ENCODE measurements at regions of chr9 and their contacts with region 1.

Region 1: GRCh38 chr9:129979071-129979745 is 63.8 kb downstream of the FNBP1 start:
- DNase-seq: no peak
- H3K4me3 ChIP-seq: no peak overlapping the region
- H3K27ac ChIP-seq: no peak overlapping the region
- H3K4me1 ChIP-seq: no peaks in the 10 kb centered on the region
- H3K27me3 ChIP-seq: no peaks in the 10 kb centered on the region
- CTCF ChIP-seq: no peak

Region 2: GRCh38 chr9:129919841-129920240 is 59.4 kb before region 1 on chr9:
- CTCF ChIA-PET with region 1: no interaction called
- dilution Hi-C with region 1: loop called (anchors 5 kb)
- in situ Hi-C with region 1: no loop called
- intact Hi-C with region 1: no loop called
- DNase-seq: no peak
- H3K4me3 ChIP-seq: no peak overlapping the region
- H3K27ac ChIP-seq: no peak overlapping the region
- H3K4me1 ChIP-seq: no peaks in the 10 kb centered on the region
- H3K27me3 ChIP-seq: no peaks in the 10 kb centered on the region
- CTCF ChIP-seq: no peak

Region 3: GRCh38 chr9:129932303-129933151 is 46.7 kb before region 1 on chr9:
- CTCF ChIA-PET with region 1: no interaction called
- dilution Hi-C with region 1: no loop called
- in situ Hi-C with region 1: no loop called
- intact Hi-C with region 1: no loop called
- DNase-seq: no peak
- H3K4me3 ChIP-seq: no peak overlapping the region
- H3K27ac ChIP-seq: no peak overlapping the region
- H3K4me1 ChIP-seq: no peaks in the 10 kb centered on the region
- H3K27me3 ChIP-seq: no peaks in the 10 kb centered on the region
- CTCF ChIP-seq: no peak

Region 4: GRCh38 chr9:130053504-130054324 is 74.5 kb after region 1 on chr9 and contains the start of gene GPR107:
- CTCF ChIA-PET with region 1: no interaction called
- dilution Hi-C with region 1: loop called (anchors 5 kb)
- in situ Hi-C with region 1: no loop called
- intact Hi-C with region 1: no loop called
- DNase-seq: peak; percentile 68
- H3K4me3 ChIP-seq: peak within 1 kb of the TSS; percentile 71 to 89 (median 86)
- H3K27ac ChIP-seq: peak within 1 kb of the TSS; percentile 82
- H3K4me1 ChIP-seq: peaks cover 10% of the 10 kb centered on the region
- H3K27me3 ChIP-seq: no peaks in the 10 kb centered on the region
- CTCF ChIP-seq: no peak
- total RNA-seq, gene GPR107: 34.2 to 41.4 TPM

Region 5: GRCh38 chr9:130382636-130383349 is 403.6 kb after region 1 on chr9:
- CTCF ChIA-PET with region 1: no interaction called
- dilution Hi-C with region 1: no loop called
- in situ Hi-C with region 1: no loop called
- intact Hi-C with region 1: no loop called
- DNase-seq: no peak
- H3K4me3 ChIP-seq: no peak overlapping the region
- H3K27ac ChIP-seq: no peak overlapping the region
- H3K4me1 ChIP-seq: no peaks in the 10 kb centered on the region
- H3K27me3 ChIP-seq: no peaks in the 10 kb centered on the region
- CTCF ChIP-seq: no peak

Region 6: DNA sequence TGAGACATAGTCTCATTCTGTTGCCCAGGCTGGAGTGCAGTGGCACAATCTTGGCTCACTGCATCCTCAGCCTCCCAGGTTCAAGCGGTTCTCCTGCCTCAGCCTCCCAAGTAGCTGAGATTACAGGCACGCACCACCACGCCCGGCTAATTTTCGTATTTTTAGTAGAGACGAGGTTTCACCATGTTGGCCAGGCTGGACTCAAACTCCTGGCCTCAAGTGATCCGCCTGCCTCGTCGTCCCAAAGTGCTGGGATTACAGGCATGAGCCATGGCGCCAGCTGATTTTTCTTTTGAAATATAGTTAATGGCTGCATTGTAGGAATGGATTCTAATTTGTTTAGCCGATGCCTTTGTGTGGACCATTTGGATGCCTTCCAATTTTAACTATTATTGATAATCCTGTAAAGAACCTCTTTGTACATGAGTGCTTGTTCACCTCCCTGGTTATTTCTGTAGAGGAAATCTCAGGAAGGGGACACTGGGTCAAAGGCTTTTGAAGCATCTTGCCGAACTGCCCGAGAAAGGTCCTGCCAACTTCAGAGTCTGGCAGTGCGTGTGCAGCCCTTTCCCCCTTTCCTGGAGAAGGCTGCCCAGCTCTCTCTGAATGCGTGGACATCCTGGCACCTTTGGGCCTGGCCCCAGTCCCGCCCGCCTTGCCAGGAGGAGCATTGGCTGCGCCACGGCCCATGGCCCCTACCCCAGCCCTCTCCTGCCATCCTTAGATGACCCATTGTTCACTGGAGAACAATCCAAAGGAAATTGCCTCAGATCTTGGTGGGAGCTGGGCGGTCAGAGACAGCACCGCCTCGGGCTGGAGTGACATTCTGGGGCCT is 1137.3 kb after region 1 on chr9:
- CTCF ChIA-PET with region 1: no interaction called
- dilution Hi-C with region 1: no loop called
- in situ Hi-C with region 1: no loop called
- intact Hi-C with region 1: no loop called
- DNase-seq: no peak
- H3K4me3 ChIP-seq: no peak overlapping the region
- H3K27ac ChIP-seq: no peak overlapping the region
- H3K4me1 ChIP-seq: peaks cover 15% of the 10 kb centered on the region
- H3K27me3 ChIP-seq: no peaks in the 10 kb centered on the region
- CTCF ChIP-seq: no peak